ENCODE measurements at regions of chr3 and their contacts with region 1.

Region 1: DNA sequence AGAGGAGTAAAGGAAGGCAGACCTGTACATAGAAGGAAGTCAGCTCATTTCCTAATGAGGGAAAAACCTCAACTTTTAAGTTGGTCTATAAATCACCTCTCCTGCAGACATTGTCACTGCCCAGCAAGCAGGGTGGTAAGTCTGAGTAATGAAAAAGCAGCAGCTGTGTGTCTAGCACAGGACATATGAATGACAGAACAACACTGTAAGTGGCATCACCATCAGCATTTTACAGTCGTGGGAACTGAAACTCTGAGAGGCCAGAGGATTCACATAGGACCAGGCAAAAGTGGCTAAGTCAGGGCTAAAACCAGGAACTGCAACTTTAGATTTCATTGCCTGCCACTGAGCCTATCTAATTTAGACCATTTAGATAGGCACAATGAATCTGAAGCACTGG is 235.6 kb downstream of the CLSTN2 start:
- DNase-seq: peak; percentile 97
- ATAC-seq: peak; percentile 99
- H3K4me3 ChIP-seq: no peak overlapping the region
- H3K27ac ChIP-seq: peak overlapping the region; percentile 55
- H3K4me1 ChIP-seq: peaks cover 11% of the 10 kb centered on the region
- H3K27me3 ChIP-seq: no peaks in the 10 kb centered on the region
- CTCF ChIP-seq: no peak
- EP300 ChIP-seq: no peak
- POLR2A ChIP-seq: no peak
- RAD21 ChIP-seq: no peak

Region 2: GRCh38 chr3:140152851-140153639 is 17.6 kb before region 1 on chr3:
- CTCF ChIA-PET with region 1: interaction called, 6 read pairs
- POLR2A ChIA-PET with region 1: interaction called, 3 read pairs
- RAD21 ChIA-PET with region 1: interaction called, 5 read pairs
- SMC1A ChIA-PET with region 1: interaction called, 24 read pairs
- in situ Hi-C with region 1: no loop called
- intact Hi-C with region 1: no loop called
- DNase-seq: no peak
- ATAC-seq: peak; percentile 26; the same call in 1 of the 3 replicates
- H3K4me3 ChIP-seq: no peak overlapping the region
- H3K27ac ChIP-seq: no peak overlapping the region
- H3K4me1 ChIP-seq: 0 out of 2 replicates have a peak, but pooled peaks cover 11% of the 10 kb centered on the region
- H3K27me3 ChIP-seq: no peaks in the 10 kb centered on the region
- CTCF ChIP-seq: no peak
- EP300 ChIP-seq: no peak
- POLR2A ChIP-seq: no peak
- RAD21 ChIP-seq: no peak

Measured in GM12878 (cell line).